Activated T-helper 2 cell treated with anti-CD3 and anti-CD28 coated beads, Interferon-gamma antibody, Interleukin-2, Interleukin-4, amounts not matched to agents 10 μg/mL and 5 μg/mL and 100 μg/mL, durations not matched to agents 14 hours and 24 hours and 36 hours (primary cell): ENCODE measurements at regions of chr6 and their contacts with region 1.

Region 1: DNA sequence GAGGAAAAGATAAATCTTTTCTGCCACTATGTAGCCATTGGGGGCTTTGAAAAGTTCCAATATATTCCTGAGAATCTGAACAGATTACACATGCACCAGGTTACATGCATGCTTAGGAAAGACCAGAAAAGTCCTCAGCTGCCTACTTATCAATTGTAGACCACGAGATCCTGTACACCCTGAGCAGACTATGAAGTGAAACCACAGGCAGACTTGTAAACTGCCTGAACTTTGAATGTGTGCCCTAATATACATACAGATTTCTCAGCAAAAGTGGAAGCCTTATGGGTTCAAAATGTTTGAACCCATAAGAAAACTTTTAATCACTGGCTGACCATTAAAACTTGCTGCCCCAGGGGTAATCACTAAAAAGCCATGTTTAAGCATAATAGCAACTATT is 273.5 kb upstream of the RUNX2 start:
- DNase-seq: no peak
- H3K4me3 Mint-ChIP-seq: no peak overlapping the region
- H3K27ac Mint-ChIP-seq: no peak overlapping the region
- H3K4me1 Mint-ChIP-seq: peaks cover 29% of the 10 kb centered on the region
- H3K27me3 Mint-ChIP-seq: no peaks in the 10 kb centered on the region

Region 2: DNA sequence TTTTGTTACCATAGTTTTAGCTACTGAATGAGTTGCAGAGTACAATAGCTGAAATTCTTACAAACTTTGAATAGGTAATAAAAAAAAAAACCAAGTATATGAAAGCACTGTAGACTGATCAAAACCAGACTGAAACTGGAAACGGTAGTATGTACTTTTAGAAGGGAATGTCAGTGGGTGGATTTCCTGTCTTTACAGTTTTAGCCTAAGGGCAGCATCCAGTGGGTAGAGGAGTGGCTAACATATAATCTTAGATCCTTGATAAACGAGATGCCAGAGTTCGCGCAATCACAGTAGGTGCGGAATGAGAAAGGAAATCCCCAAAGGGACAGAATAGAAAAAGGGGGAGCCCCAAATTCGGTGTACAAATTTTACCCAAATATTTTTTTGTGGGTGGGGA is 112.4 kb before region 1 on chr6:
- intact Hi-C with region 1: loop called (anchors 1 kb)
- DNase-seq: no peak
- H3K4me3 Mint-ChIP-seq: no peak overlapping the region
- H3K27ac Mint-ChIP-seq: no peak overlapping the region
- H3K4me1 Mint-ChIP-seq: peaks cover 36% of the 10 kb centered on the region
- H3K27me3 Mint-ChIP-seq: no peaks in the 10 kb centered on the region

Region 3: DNA sequence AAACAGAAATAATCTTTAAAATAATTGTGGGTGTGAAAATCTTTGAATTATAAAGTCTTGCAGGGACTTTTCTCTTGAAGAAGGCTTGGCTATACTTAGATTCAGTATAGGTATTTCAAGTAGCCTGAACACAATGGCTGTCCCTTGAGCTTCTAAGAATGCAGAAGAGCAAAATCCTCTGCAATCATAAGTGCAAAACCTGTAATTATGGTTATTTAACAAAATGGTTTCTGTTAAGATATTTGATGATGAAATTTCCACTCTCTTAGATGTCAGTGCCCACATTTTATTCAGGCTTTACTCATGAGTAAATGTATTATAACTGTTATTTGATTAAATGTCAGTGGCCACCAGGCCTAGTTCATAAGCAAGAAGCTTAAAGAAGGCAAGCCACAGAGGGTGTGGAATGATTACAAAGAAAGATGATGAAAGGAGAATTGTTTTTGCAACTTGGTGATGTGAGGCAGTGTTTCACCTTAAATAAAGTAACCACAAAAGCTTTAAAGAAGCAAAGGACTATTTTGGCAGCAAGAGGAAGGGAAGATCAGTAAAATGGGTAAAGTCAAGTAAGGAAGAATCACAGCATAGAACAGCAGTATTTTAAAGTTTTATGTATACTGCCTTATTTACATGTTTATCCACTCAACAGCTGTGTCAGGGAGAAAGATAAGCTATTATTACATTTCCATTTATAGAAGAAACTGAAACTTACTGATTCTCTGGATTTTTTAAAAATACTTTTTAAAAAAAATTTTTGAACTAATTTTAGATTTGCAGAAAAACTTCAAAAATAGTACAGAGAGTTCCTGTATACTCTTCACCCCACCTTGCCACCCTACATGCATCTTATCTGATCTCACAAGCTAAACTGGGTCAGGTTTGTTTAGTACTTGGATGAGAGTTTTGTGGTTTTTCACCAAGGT is 77.6 kb before region 1 on chr6:
- intact Hi-C with region 1: loop called (anchors 2 kb)
- DNase-seq: no peak
- H3K4me3 Mint-ChIP-seq: no peak overlapping the region
- H3K27ac Mint-ChIP-seq: peak overlapping the region; percentile 84
- H3K4me1 Mint-ChIP-seq: peaks cover 44% of the 10 kb centered on the region
- H3K27me3 Mint-ChIP-seq: no peaks in the 10 kb centered on the region

Region 4: DNA sequence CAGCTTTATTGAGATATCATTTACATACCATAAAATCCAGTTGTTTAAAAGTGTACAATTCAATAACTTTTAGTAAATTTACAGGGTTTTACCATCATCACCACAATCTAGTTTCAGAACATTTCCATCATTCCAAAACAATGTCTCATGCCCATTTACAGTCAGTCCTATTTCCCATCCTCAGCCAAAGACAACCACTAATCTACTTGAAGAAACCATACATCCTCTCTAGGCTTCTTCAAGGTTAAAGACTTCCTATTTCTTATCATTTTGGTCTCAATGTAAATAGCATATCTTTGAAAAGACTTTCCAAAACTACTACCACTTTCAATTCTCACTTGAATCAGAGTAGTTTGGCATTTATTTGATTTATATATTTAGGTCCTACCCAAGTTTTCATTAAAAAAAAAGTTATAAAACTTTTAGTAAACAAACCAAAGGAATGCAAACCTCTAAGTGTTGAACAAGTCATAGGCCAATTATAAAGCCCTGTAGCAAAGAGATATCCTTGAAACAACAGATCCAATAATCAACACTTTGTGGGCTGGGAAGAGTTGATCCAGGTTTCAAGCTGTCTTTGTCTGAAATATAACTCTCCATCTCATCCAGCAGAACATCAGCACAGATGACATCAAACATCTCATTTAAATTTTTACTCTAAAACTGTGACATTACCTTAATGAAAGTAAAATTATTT is 62.3 kb after region 1 on chr6:
- intact Hi-C with region 1: no loop called
- DNase-seq: no peak
- H3K4me3 Mint-ChIP-seq: no peak overlapping the region
- H3K27ac Mint-ChIP-seq: peak overlapping the region; percentile 34
- H3K4me1 Mint-ChIP-seq: peaks cover 27% of the 10 kb centered on the region
- H3K27me3 Mint-ChIP-seq: no peaks in the 10 kb centered on the region